Prostate gland (tissue), 2 donors: ENCODE measurements at regions of chr14 and their contacts with region 1.

Region 1: GRCh38 chr14:34982417-34983147 is at the start of gene SRP54:
- DNase-seq: peak; percentile 99
- H3K4me3 ChIP-seq: peak within 1 kb of the TSS; percentile 79 to 93
- H3K27ac ChIP-seq: peak within 1 kb of the TSS; percentile 93 to 99
- H3K4me1 ChIP-seq: no peaks in the 10 kb centered on the region
- H3K27me3 ChIP-seq: no peaks in the 10 kb centered on the region
- CTCF ChIP-seq: peak in 2 of 4 experiments; percentile 68 to 76
- POLR2A ChIP-seq: peak; percentile 99
- total RNA-seq, gene SRP54: 54.9 to 70.0 TPM

Region 2: DNA sequence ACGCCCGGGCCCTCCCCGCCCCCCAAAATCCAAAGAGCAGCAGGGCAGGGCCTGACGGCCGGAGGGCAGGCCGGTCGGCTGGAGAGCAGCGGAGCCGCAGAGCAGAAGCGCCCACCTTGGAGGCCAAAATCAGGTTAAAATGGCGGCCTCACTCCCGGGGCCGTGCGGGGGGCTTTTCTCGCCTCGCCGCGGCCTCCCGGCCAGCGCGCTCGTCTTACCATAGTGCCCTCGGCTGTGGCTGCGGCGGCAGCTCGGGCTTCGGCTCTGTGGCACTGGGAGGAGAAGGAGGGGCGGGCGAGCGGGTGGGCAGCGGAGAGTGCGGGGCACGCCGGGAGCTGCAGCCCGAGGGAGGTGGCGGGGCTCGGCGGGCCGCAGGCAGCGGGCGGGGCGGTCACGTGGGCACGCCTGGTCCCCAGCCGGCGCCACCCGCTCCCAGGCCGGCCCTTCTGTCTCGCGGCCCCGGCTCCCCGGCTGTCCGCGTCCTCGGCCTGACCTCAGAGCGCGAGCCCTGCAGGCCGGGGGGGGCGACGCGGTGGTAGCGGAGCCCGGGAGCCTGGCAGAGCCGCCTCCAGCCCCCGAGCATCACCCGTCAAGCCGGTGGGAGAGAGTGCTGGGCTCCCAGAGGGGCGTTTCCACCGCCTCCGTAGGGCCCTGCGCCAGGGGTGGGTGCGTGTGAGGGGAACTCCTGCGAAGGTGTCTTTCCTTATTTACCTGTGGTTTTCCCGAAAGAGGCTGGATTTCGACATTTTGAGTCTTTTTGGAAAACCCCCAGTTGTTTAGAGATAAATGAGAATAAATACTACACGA is 268.1 kb before region 1 on chr14 and contains the start of gene CFL2:
- intact Hi-C with region 1: loop called (anchors 2 kb)
- DNase-seq: peak; percentile 79
- H3K4me3 ChIP-seq: peak within 1 kb of the TSS; percentile 91 to 96
- H3K27ac ChIP-seq: peak within 1 kb of the TSS; percentile 94 to 99
- H3K4me1 ChIP-seq: no peaks in the 10 kb centered on the region
- H3K27me3 ChIP-seq: no peaks in the 10 kb centered on the region
- CTCF ChIP-seq: peak in 1 of 4 experiments; percentile 10
- POLR2A ChIP-seq: peak; percentile 64
- total RNA-seq, gene CFL2: 46.3 to 79.2 TPM

Region 3: DNA sequence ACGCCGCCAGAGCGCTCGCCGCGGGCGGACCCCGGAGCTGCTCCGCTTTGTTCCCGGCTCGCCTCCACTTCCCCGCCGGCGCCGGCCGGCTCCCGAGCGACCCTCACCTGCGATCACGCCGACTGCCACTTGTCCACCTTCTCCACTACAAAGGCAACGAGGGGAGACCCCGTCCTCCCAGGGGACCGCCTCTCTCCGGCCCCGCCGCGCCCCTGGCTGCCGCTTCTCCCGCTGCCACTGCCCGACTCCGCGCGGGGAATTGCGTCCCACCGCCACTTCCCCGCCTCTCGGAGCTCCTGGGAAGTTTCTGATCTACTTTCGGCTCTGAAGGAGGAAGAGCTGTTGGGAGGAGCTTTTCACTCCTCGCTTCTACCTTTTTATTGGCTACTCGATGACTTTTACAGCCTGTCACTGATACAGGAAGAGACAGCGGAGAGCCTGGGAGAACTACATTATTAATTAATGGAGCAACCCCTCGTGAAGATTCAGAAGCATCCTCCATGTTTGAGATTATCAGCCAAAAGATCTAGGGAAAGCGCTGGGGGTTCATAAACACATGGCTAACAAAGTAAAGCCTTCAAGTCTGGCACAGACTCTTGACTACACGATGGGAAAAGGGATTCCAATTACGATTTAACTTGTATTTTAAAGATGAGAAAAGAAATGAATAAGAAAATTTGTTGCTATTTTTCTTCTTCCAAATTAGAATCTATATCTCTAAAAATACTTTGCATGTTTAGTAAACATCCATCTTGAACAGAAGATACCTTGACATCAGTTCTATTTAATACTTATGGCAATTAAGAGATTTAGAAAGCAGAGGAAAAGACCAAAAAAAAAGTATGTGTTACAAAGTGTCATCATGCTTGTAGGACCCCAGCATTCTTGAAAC is 107.3 kb before region 1 on chr14 and contains the start of gene BAZ1A:
- intact Hi-C with region 1: loop called (anchors 2 kb)
- DNase-seq: peak; percentile 78
- H3K4me3 ChIP-seq: peak within 1 kb of the TSS; percentile 73 to 80
- H3K27ac ChIP-seq: peak within 1 kb of the TSS; percentile 99 to 100
- H3K4me1 ChIP-seq: no peaks in the 10 kb centered on the region
- H3K27me3 ChIP-seq: no peaks in the 10 kb centered on the region
- CTCF ChIP-seq: peak in 2 of 4 experiments; percentile 30 to 42
- POLR2A ChIP-seq: peak; percentile 97
- total RNA-seq, gene BAZ1A: 25.3 to 31.5 TPM

Region 4: DNA sequence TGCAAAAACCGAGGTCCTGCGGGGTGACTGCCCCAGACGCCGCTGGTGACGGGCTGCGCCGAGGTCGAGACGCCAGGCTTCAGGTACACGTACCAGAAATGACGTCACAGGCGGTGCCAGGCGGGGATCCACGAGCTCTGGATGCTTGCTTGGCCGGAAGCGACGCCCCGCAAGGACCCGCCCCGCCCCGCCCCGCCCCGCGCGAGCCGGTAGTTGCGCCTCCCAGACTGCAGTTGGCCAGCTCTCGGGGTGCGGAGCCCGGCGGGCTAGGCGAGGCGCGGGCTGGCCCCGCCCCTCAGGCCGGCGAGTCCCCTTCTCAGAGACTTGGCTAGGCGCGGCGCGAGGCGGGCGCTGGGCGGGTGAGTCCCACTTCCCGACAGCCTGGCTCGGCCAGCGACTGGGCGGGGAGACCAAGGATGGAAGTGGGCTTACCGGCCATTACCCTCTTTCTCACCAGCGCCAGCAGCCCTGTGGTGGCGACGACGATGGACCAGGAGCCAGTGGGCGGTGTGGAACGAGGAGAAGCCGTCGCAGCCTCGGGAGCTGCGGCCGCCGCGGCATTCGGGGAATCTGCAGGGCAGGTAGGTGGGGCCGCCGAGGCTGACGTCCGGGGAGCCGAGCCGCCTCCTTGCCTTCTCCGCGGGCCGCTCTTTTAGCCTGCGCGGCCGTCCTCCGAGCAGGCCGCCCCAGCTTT is 63.6 kb after region 1 on chr14 and contains the start of gene FAM177A1:
- intact Hi-C with region 1: loop called (anchors 5 kb)
- DNase-seq: peak; percentile 99
- H3K4me3 ChIP-seq: peak within 1 kb of the TSS; percentile 74 to 92
- H3K27ac ChIP-seq: peak within 1 kb of the TSS; percentile 98 to 100
- H3K4me1 ChIP-seq: no peaks in the 10 kb centered on the region
- H3K27me3 ChIP-seq: no peaks in the 10 kb centered on the region
- CTCF ChIP-seq: peak in 2 of 4 experiments; percentile 24 to 53
- POLR2A ChIP-seq: peak; percentile 96
- total RNA-seq, gene FAM177A1: 58.1 to 89.8 TPM